ENCODE measurements at regions of chr4 and their contacts with region 1.

Region 1: GRCh38 chr4:65668201-65669089 is 1.8 kb downstream of the EPHA5 start:
- DNase-seq: peak; percentile 44
- H3K4me3 ChIP-seq: peak overlapping the region; percentile 73
- H3K27ac ChIP-seq: peak overlapping the region; percentile 82
- H3K4me1 ChIP-seq: peaks cover 31% of the 10 kb centered on the region
- H3K27me3 ChIP-seq: no peaks in the 10 kb centered on the region
- CTCF ChIP-seq: no peak

Region 2: GRCh38 chr4:65589331-65589730 is 79.1 kb before region 1 on chr4:
- CTCF ChIA-PET with region 1: no interaction called
- POLR2A ChIA-PET with region 1: no interaction called
- intact Hi-C with region 1: loop called (anchors 5 kb)
- DNase-seq: no peak
- H3K4me3 ChIP-seq: no peak overlapping the region
- H3K27ac ChIP-seq: no peak overlapping the region
- H3K4me1 ChIP-seq: peaks cover 37% of the 10 kb centered on the region
- H3K27me3 ChIP-seq: no peaks in the 10 kb centered on the region
- CTCF ChIP-seq: no peak

Measured in A673 (cell line).